ENCODE measurements at regions of chr17 and their contacts with region 1.

Region 1: GRCh38 chr17:76452660-76453430 is at the start of gene UBE2O:
- DNase-seq: peak; percentile 100
- H3K4me3 ChIP-seq: peak within 1 kb of the TSS; percentile 74 to 95
- H3K27ac ChIP-seq: peak within 1 kb of the TSS; percentile 41 to 70
- H3K4me1 ChIP-seq: peaks cover 14 to 21% of the 10 kb centered on the region in 2 experiments
- H3K27me3 ChIP-seq: no peaks in the 10 kb centered on the region
- CTCF ChIP-seq: peak; percentile 64
- EP300 ChIP-seq: no peak; a peak in 1 of 4 replicates
- RAD21 ChIP-seq: no peak
- polyA plus RNA-seq, gene UBE2O: 20.0 and 25.4 TPM in 2 replicates

Region 2: DNA sequence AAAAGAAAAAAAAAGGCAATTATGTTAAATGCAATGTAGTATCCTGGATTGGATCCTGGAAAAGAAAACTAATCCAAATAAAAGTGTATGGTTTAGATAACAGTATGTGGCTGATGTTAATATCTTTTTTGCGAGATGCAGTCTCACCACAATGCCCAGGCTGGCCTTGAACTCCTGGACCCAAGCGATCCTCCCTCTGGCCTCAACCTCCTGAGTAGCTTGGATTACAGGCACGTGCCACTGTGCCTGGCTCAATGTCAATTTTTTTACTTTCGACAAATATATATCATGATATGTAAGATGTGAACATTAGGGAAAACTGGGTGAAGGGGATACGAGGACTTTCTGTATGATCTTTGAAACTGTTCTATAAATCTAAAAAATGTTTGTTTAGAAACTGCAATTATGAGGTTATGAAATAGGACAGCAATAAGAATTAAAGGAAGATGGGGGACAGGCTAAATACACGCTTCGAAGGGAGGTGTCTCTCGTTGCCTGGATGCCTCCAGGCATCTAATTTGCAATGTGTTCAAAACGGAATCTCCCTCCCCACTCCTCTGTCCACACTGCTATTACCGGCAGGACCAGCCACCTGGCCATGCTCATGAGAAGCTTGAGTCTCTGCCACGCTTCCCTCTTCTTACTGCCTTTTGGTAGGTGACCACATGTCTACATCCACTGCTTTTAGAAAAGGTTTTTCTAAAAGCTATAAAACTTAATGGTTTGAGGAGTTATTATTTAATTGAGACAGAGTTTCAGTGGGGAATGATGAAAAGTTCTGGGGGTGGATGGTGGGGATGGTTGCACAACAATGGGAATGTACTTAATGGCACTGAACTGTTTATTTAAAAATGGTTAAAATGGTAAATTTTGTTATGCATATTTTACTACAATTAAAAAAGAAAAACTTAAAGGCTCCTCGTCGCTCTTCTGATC is 15.1 kb before region 1 on chr17:
- CTCF ChIA-PET with region 1: interaction called, 60 read pairs
- POLR2A ChIA-PET with region 1: interaction called, 3 read pairs
- DNase-seq: no peak
- H3K4me3 ChIP-seq: no peak overlapping the region
- H3K27ac ChIP-seq: no peak overlapping the region
- H3K4me1 ChIP-seq: peaks cover 0 to 11% of the 10 kb centered on the region in 2 experiments; a peak in 2 of 4 replicates
- H3K27me3 ChIP-seq: no peaks in the 10 kb centered on the region
- CTCF ChIP-seq: no peak
- EP300 ChIP-seq: no peak
- RAD21 ChIP-seq: no peak

Region 3: DNA sequence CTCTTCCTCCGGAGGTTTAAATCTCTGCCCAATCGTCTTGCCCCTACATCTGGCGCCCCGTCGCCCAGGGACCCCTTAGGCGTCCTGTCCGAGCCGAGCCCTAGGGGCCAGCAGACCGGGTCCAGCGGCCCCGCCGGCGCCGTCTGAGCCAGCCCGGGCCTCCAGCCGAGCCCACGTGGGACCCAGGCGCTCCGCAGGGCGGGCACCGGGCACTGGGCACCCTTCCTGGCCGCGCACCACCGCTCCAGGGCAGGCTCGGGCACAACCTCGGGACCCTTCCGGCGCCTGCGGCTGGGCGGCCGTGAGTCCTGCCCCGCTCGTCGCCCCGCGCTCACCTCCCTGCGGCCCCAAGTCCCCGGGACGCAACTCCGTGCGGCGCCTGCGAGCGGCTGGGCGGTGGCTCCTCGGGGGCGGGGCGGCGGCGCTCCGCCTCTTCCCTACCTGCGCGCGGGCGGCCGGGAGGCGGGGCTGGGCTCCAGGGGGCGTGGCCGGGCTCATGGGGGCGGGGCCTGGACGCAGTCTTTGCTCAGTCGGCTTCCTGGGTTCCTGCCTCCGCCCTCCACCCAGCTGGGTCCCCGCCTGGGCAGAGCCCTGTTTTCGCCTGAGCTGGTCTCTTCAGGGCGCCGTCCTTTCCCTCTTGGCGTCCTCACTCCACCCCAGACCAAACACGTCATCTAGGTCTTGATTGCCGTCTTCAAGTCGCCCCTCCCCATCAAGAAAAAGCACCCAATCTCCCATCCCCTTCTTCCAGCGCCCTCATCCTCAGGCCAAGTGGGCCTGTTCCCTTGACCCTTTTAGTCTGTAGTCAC is 48.4 kb after region 1 on chr17 and contains the start of gene RHBDF2:
- CTCF ChIA-PET with region 1: interaction called, 1,687 read pairs
- POLR2A ChIA-PET with region 1: interaction called, 6 read pairs
- DNase-seq: peak; percentile 97
- H3K4me3 ChIP-seq: peak within 1 kb of the TSS; percentile 65 to 78
- H3K27ac ChIP-seq: peak within 1 kb of the TSS in 1 of 2 experiments; percentile 30; a peak in 1 of 4 replicates
- H3K4me1 ChIP-seq: peaks cover 21 to 50% of the 10 kb centered on the region in 2 experiments; a peak in 3 of 4 replicates
- H3K27me3 ChIP-seq: no peaks in the 10 kb centered on the region
- CTCF ChIP-seq: no peak
- EP300 ChIP-seq: no peak
- RAD21 ChIP-seq: no peak
- polyA plus RNA-seq, gene RHBDF2: 14.0 and 16.1 TPM in 2 replicates

Region 4: DNA sequence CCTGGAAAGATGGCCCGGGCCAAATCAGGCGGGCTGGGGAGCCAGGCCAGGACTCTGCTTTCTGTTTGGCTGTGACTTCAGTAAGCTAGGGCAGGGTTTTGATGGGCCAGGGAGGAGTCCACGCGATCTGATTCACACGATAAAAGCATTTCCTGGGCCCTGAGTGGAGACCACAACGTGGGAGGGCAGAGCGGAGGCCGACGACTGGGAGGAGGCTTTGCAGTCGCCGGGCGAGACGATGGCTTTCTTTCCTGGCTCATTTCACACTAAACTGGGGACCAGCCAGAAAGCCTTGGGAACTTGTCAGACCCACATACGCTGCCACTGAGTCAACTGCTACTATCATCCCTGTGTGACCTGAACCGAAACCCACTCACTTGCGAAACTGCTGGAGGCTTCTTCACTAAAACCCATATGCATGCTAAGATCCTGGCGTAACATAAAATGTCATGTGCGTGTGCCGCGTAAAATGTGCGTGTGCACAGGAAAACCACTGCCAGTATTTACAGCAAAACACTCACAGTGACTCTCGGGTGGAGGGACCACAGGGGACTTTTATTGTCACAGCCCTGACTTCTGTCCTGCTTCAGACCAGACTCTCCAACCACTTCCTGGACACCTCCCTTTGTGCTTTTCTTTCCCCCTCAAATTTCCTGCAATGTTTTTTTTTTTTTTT is 62.6 kb after region 1 on chr17:
- CTCF ChIA-PET with region 1: interaction called, 1,687 read pairs
- POLR2A ChIA-PET with region 1: no interaction called
- DNase-seq: no peak
- H3K4me3 ChIP-seq: no peak overlapping the region
- H3K27ac ChIP-seq: no peak overlapping the region
- H3K4me1 ChIP-seq: peaks cover 0 to 6% of the 10 kb centered on the region in 2 experiments; a peak in 1 of 4 replicates
- H3K27me3 ChIP-seq: peaks cover 27% of the 10 kb centered on the region; the same call in 1 of the 2 replicates
- CTCF ChIP-seq: no peak
- EP300 ChIP-seq: no peak
- RAD21 ChIP-seq: no peak

Measured in SK-N-SH (cell line).